ENCODE measurements at regions of chr3 and their contacts with region 1.

Region 1: DNA sequence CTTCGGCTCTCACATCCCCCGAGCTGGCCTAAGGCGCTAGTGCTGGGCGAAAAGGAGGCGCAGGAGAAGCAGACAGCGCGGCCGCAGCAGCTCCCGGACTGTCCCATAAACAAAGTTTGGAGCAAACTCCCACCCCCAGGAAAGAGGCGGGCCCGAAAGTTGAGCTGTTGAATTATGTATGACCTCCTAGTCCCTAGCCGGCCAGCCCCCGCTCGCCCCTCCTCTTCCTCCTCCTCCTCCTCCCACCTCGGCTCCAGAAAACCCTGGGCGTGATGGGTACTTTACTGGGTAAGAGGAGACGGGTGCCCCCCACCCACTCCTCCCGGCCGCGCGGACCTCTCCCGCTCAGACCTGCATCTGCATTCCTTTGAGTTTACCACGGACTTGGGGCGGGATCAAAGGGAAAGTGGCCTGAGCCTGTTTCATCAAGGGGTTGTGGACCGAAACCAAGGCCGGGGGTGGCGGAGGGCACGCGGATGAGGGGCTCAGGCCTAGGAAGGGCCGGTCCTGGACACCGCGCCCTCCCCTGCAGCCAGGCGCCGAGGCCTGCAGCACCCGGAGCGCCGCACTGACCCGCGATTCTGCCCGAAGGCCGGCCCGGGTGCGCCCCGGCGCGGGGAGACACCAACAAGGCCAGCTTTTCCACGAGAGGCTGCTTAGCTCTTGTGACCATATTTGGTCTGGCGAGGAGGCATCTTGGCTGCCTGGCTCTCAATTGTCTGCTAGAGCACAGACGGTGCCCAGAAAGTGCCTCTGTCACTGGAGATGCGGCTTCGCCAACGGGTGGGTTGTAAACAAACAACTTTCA is at the start of gene WWTR1:
- DNase-seq: peak; percentile 95
- H3K4me3 ChIP-seq: peak within 1 kb of the TSS; percentile 66
- H3K27ac ChIP-seq: peak within 1 kb of the TSS; percentile 99
- H3K4me1 ChIP-seq: peaks cover 30% of the 10 kb centered on the region
- H3K27me3 ChIP-seq: no peaks in the 10 kb centered on the region
- CTCF ChIP-seq: 0 out of 2 replicates have a peak, but pooled peaks have one; percentile 14
- total RNA-seq, gene WWTR1: 72.9 and 76.8 TPM in 2 replicates

Region 2: GRCh38 chr3:149534671-149535332 is 123.3 kb before region 1 on chr3:
- CTCF ChIA-PET with region 1: no interaction called
- POLR2A ChIA-PET with region 1: no interaction called
- intact Hi-C with region 1: loop called (anchors 5 kb)
- DNase-seq: peak; percentile 25
- H3K4me3 ChIP-seq: peak overlapping the region; percentile 2
- H3K27ac ChIP-seq: peak overlapping the region; percentile 7
- H3K4me1 ChIP-seq: peaks cover 30% of the 10 kb centered on the region
- H3K27me3 ChIP-seq: no peaks in the 10 kb centered on the region
- CTCF ChIP-seq: no peak

Region 3: GRCh38 chr3:149575961-149576564 is 82.1 kb before region 1 on chr3:
- CTCF ChIA-PET with region 1: no interaction called
- POLR2A ChIA-PET with region 1: interaction called, 3 read pairs
- intact Hi-C with region 1: loop called (anchors 5 kb)
- DNase-seq: peak; percentile 97
- H3K4me3 ChIP-seq: peak overlapping the region; percentile 26
- H3K27ac ChIP-seq: peak overlapping the region; percentile 96
- H3K4me1 ChIP-seq: peaks cover 77% of the 10 kb centered on the region
- H3K27me3 ChIP-seq: no peaks in the 10 kb centered on the region
- CTCF ChIP-seq: no peak

Region 4: GRCh38 chr3:149609595-149609994 is 48.5 kb before region 1 on chr3:
- CTCF ChIA-PET with region 1: no interaction called
- POLR2A ChIA-PET with region 1: interaction called, 3 read pairs
- intact Hi-C with region 1: loop called (anchors 10 kb)
- DNase-seq: no peak
- H3K4me3 ChIP-seq: no peak overlapping the region
- H3K27ac ChIP-seq: no peak overlapping the region
- H3K4me1 ChIP-seq: peaks cover 49% of the 10 kb centered on the region
- H3K27me3 ChIP-seq: no peaks in the 10 kb centered on the region
- CTCF ChIP-seq: no peak

Region 5: GRCh38 chr3:149738876-149739275 is 80.7 kb after region 1 on chr3:
- CTCF ChIA-PET with region 1: no interaction called
- POLR2A ChIA-PET with region 1: interaction called, 11 read pairs
- intact Hi-C with region 1: no loop called
- DNase-seq: no peak
- H3K4me3 ChIP-seq: no peak overlapping the region
- H3K27ac ChIP-seq: no peak overlapping the region
- H3K4me1 ChIP-seq: no peaks in the 10 kb centered on the region
- H3K27me3 ChIP-seq: no peaks in the 10 kb centered on the region
- CTCF ChIP-seq: no peak

Measured in A673 (cell line).